ENCODE measurements at regions of chr22 and their contacts with region 1.

Region 1: GRCh38 chr22:45435544-45436139 is 22.1 kb downstream of the RIBC2 start:
- DNase-seq: peak; percentile 56
- H3K4me3 ChIP-seq: no peak overlapping the region
- CTCF ChIP-seq: peak; percentile 97

Region 2: GRCh38 chr22:45136594-45136993 is 299.0 kb before region 1 on chr22:
- CTCF ChIA-PET with region 1: no interaction called
- POLR2A ChIA-PET with region 1: no interaction called
- DNase-seq: no peak
- H3K4me3 ChIP-seq: no peak overlapping the region
- CTCF ChIP-seq: no peak

Region 3: GRCh38 chr22:45268958-45269844 is 166.4 kb before region 1 on chr22:
- CTCF ChIA-PET with region 1: interaction called, 59 read pairs
- POLR2A ChIA-PET with region 1: no interaction called
- DNase-seq: no peak
- H3K4me3 ChIP-seq: peak overlapping the region; percentile 67
- CTCF ChIP-seq: peak; percentile 82

Region 4: DNA sequence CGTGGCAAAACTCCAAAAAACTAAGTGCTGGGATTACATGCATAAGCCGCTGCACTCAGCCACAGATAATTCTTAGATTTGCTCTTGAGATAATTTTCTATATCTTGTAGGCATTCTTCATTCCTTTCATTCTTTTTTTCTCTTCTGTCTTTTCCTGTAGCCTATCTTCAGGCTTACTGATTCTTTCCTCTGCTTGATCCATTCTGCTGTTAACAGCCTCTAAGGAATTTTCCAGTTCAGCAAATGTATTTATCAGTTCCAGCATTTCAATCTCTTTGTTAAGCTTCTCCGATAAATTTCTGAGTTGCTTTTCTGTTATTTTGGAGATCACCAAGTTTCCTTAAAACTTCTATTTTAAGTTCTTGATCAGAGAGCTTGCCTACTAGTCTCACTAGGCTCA is 68.9 kb before region 1 on chr22:
- CTCF ChIA-PET with region 1: no interaction called
- POLR2A ChIA-PET with region 1: no interaction called
- DNase-seq: no peak
- H3K4me3 ChIP-seq: no peak overlapping the region
- CTCF ChIP-seq: no peak

Region 5: GRCh38 chr22:45424231-45424731 is 11.4 kb before region 1 on chr22:
- CTCF ChIA-PET with region 1: interaction called, 13 read pairs
- POLR2A ChIA-PET with region 1: no interaction called
- DNase-seq: no peak
- H3K4me3 ChIP-seq: no peak overlapping the region
- CTCF ChIP-seq: no peak

Measured in AG04449 (cell line).